ENCODE measurements at regions of chr1 and their contacts with region 1.

Region 1: DNA sequence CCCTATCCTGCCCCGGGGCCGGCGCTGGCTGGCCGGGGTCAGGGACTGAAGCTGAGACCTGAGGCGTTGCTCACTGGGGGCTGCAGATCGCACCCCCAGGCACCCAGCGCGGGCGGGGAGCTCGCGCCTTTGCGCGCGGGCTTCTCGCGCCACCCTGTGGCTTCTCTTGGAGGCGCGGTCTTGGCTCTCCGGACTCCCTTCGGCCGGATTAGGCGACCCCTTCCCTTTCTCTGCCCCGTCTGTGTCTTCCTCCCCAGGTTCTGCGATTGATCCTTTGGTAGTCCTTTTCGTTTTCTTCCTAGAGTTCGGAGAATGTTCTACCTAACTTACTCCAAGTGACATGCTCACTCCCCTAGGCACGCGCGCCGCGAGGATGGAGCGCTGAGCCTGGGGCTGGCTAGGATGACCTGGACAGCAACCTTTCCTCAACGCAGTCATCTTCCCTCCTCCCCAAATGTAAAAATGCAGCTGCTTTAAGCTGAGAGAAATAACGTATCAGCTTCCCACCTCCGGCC is 495 bp upstream of the NTRK1 start:
- DNase-seq: peak in 1 of 2 experiments; percentile 85
- H3K4me3 ChIP-seq: peak overlapping the region; percentile 31 to 62 (median 58)
- H3K27ac ChIP-seq: no peak overlapping the region
- H3K4me1 ChIP-seq: peaks cover 0 to 15% (median 9%) of the 10 kb centered on the region in 4 experiments; a peak in 6 of 7 replicates
- H3K27me3 ChIP-seq: peaks cover 55 to 87% (median 82%) of the 10 kb centered on the region in 4 experiments
- CTCF ChIP-seq: peak; percentile 67 to 80 (median 74)
- EP300 ChIP-seq: no peak
- POLR2A ChIP-seq: no peak
- RAD21 ChIP-seq: peak; percentile 76 to 83

Region 2: GRCh38 chr1:156705918-156706656 is 154.1 kb before region 1 on chr1:
- CTCF ChIA-PET with region 1: interaction called, 30 read pairs
- POLR2A ChIA-PET with region 1: no interaction called
- DNase-seq: peak; percentile 86 to 98
- H3K4me3 ChIP-seq: peak overlapping the region; percentile 50 to 80 (median 70)
- H3K27ac ChIP-seq: peak overlapping the region; percentile 79
- H3K4me1 ChIP-seq: peaks cover 27 to 57% (median 45%) of the 10 kb centered on the region in 4 experiments
- H3K27me3 ChIP-seq: peaks cover 0 to 19% (median 8%) of the 10 kb centered on the region in 4 experiments; a peak in 4 of 7 replicates
- CTCF ChIP-seq: peak; percentile 72 to 86 (median 81)
- EP300 ChIP-seq: peak in 1 of 2 experiments; percentile 51; a peak in 1 of 3 replicates
- POLR2A ChIP-seq: no peak
- RAD21 ChIP-seq: peak; percentile 78 to 88

Region 3: GRCh38 chr1:156805766-156806511 is 54.2 kb before region 1 on chr1:
- CTCF ChIA-PET with region 1: interaction called, 139 read pairs
- POLR2A ChIA-PET with region 1: interaction called, 3 read pairs
- DNase-seq: no peak
- H3K4me3 ChIP-seq: no peak overlapping the region
- H3K27ac ChIP-seq: no peak overlapping the region
- H3K4me1 ChIP-seq: no peaks in the 10 kb centered on the region; a peak in 1 of 7 replicates
- H3K27me3 ChIP-seq: peaks cover 0 to 2% (median 0%) of the 10 kb centered on the region in 4 experiments; a peak in 1 of 7 replicates
- CTCF ChIP-seq: no peak
- EP300 ChIP-seq: no peak
- POLR2A ChIP-seq: no peak
- RAD21 ChIP-seq: no peak

Region 4: DNA sequence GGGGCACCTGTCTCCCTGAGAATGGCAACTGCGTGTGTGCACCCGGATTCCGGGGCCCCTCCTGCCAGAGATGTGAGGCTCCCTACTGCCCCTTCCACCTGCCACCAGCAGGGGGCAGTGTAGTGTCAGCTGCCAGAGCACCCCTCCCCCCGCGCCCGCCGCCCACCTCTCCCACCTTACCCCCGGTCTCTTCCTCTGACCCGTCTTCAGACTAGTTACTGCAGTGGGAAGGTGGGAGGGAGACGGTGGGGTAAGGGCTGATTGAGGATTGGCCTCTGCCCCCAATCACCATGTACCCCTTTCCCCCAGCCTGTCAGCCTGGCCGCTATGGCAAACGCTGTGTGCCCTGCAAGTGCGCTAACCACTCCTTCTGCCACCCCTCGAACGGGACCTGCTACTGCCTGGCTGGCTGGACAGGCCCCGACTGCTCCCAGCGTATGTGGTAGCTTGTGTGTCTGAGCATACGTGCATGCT is 50.2 kb after region 1 on chr1:
- CTCF ChIA-PET with region 1: interaction called, 16 read pairs
- POLR2A ChIA-PET with region 1: no interaction called
- DNase-seq: peak in 1 of 2 experiments; percentile 93
- H3K4me3 ChIP-seq: peak overlapping the region in 3 of 4 experiments; percentile 45 to 56 (median 49); a peak in 6 of 8 replicates
- H3K27ac ChIP-seq: no peak overlapping the region
- H3K4me1 ChIP-seq: peaks cover 2 to 12% (median 10%) of the 10 kb centered on the region in 4 experiments
- H3K27me3 ChIP-seq: peaks cover 0 to 15% (median 11%) of the 10 kb centered on the region in 4 experiments; a peak in 6 of 7 replicates
- CTCF ChIP-seq: peak in 2 of 3 experiments; percentile 72 to 74; a peak in 3 of 4 replicates
- EP300 ChIP-seq: no peak
- POLR2A ChIP-seq: no peak
- RAD21 ChIP-seq: peak; percentile 34 to 46

Measured in H1 (cell line).